Activated CD4-positive, alpha-beta memory T cell treated with anti-CD3 and anti-CD28 coated beads for 36 hours (primary cell): ENCODE measurements at regions of chr5 and their contacts with region 1.

Region 1: GRCh38 chr5:56310711-56311204 is 77.6 kb upstream of the ANKRD55 start:
- DNase-seq: no peak
- H3K4me3 Mint-ChIP-seq: no peak overlapping the region
- H3K27ac Mint-ChIP-seq: no peak overlapping the region
- H3K4me1 Mint-ChIP-seq: peaks cover 38% of the 10 kb centered on the region
- H3K27me3 Mint-ChIP-seq: no peaks in the 10 kb centered on the region

Region 2: GRCh38 chr5:56321236-56321881 is 10.6 kb after region 1 on chr5:
- CTCF ChIA-PET with region 1: no interaction called
- POLR2A ChIA-PET with region 1: no interaction called
- intact Hi-C with region 1: loop called (anchors 1 kb)
- DNase-seq: peak; percentile 76
- H3K4me3 Mint-ChIP-seq: peak overlapping the region; percentile 59
- H3K27ac Mint-ChIP-seq: peak overlapping the region; percentile 59
- H3K4me1 Mint-ChIP-seq: peaks cover 75% of the 10 kb centered on the region
- H3K27me3 Mint-ChIP-seq: no peaks in the 10 kb centered on the region